A673 (cell line): ENCODE measurements at regions of chr4 and their contacts with region 1.

Region 1: GRCh38 chr4:116953947-116954346 is 131.4 kb downstream of the TRAM1L1 start:
- DNase-seq: no peak
- H3K4me3 ChIP-seq: no peak overlapping the region
- H3K27ac ChIP-seq: no peak overlapping the region
- H3K4me1 ChIP-seq: no peaks in the 10 kb centered on the region
- H3K27me3 ChIP-seq: no peaks in the 10 kb centered on the region
- CTCF ChIP-seq: no peak

Region 2: DNA sequence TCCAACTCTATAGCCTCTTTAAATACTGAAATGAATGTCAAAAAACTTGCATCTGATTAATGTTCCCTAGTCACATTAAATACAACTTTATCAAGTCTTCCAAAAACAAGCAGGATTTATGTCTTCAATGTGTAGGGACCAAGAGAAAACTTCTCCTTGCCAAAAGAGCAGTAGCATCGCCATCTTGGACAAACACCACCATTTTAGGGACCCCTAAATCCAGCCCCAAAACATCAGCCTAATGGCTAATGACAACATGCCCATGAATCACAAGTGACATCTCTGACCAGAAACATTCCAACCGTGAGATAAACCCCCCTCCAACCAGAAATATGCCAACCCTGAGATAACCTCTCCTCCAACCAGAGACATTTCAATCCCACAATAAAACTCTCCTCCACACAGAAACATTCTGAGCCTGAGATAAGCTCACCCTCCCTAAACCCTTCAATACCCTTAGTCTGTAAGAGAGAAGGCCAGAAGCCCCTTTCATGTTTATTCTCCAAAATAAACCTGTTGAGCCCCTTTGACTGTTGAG is 565.9 kb before region 1 on chr4:
- CTCF ChIA-PET with region 1: no interaction called
- POLR2A ChIA-PET with region 1: no interaction called
- intact Hi-C with region 1: no loop called
- DNase-seq: no peak
- H3K4me3 ChIP-seq: no peak overlapping the region
- H3K27ac ChIP-seq: no peak overlapping the region
- H3K4me1 ChIP-seq: no peaks in the 10 kb centered on the region
- H3K27me3 ChIP-seq: no peaks in the 10 kb centered on the region
- CTCF ChIP-seq: no peak

Region 3: DNA sequence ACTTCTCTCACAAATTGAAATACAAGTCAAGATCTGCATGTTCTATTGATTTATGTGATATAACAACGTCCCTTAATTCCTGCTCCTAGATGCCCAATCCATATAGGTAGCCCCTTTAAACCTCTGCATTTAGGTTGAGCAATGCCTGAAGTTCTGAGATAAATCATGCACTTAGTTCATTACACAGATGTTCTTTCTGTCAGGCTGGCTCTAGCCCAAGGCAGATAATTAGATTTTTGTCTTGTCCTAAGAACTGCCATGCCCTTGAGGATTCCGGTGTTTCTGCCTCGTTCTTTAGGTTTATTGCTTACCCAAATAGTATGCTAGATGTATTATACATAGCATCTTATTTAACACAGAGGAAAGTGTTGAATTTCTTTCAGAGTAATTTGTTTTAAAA is 11.6 kb before region 1 on chr4:
- CTCF ChIA-PET with region 1: no interaction called
- POLR2A ChIA-PET with region 1: no interaction called
- intact Hi-C with region 1: loop called (anchors 1 kb)
- DNase-seq: peak; percentile 21
- H3K4me3 ChIP-seq: no peak overlapping the region
- H3K27ac ChIP-seq: no peak overlapping the region
- H3K4me1 ChIP-seq: peaks cover 4% of the 10 kb centered on the region
- H3K27me3 ChIP-seq: no peaks in the 10 kb centered on the region
- CTCF ChIP-seq: no peak